ENCODE measurements at regions of chr19 and their contacts with region 1.

Region 1: GRCh38 chr19:23855676-23856075 is 59.0 kb upstream of the ZNF726 start:
- DNase-seq: no peak
- ATAC-seq: no peak
- H3K4me3 ChIP-seq: no peak overlapping the region
- H3K27ac ChIP-seq: no peak overlapping the region
- H3K4me1 ChIP-seq: no peaks in the 10 kb centered on the region
- H3K27me3 ChIP-seq: no peaks in the 10 kb centered on the region
- CTCF ChIP-seq: no peak

Region 2: GRCh38 chr19:23799321-23799720 is 56.4 kb before region 1 on chr19:
- CTCF ChIA-PET with region 1: no interaction called
- POLR2A ChIA-PET with region 1: no interaction called
- in situ Hi-C with region 1: no loop called
- intact Hi-C with region 1: loop called (anchors 2 kb)
- DNase-seq: no peak
- ATAC-seq: no peak
- H3K4me3 ChIP-seq: no peak overlapping the region
- H3K27ac ChIP-seq: no peak overlapping the region
- H3K4me1 ChIP-seq: no peaks in the 10 kb centered on the region
- H3K27me3 ChIP-seq: no peaks in the 10 kb centered on the region
- CTCF ChIP-seq: no peak

Region 3: DNA sequence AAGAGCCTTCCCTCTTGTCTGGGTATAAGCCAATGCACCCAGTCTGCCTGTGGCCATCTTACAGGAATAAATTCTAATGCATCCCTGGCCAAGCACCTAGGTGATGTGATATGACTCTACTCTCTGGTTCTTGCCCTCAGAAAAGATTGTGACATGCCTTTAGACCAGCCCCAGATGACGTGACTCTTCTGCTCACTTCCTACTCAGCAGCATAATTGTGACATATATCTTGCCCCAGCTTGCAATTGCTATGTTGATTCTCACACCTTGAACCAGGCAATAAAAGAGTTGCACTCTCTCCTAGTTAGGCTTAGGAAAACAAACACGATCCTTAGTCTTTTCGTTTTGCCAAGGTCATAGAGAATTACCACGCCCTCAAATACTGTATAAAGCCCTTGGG is 45.7 kb after region 1 on chr19:
- CTCF ChIA-PET with region 1: no interaction called
- POLR2A ChIA-PET with region 1: no interaction called
- in situ Hi-C with region 1: no loop called
- intact Hi-C with region 1: no loop called
- DNase-seq: no peak
- ATAC-seq: no peak
- H3K4me3 ChIP-seq: no peak overlapping the region
- H3K27ac ChIP-seq: no peak overlapping the region
- H3K4me1 ChIP-seq: no peaks in the 10 kb centered on the region
- H3K27me3 ChIP-seq: no peaks in the 10 kb centered on the region
- CTCF ChIP-seq: no peak

Measured in Panc1 (cell line).